GM23248 (cell line): ENCODE measurements at regions of chr9 and their contacts with region 1.

Region 1: DNA sequence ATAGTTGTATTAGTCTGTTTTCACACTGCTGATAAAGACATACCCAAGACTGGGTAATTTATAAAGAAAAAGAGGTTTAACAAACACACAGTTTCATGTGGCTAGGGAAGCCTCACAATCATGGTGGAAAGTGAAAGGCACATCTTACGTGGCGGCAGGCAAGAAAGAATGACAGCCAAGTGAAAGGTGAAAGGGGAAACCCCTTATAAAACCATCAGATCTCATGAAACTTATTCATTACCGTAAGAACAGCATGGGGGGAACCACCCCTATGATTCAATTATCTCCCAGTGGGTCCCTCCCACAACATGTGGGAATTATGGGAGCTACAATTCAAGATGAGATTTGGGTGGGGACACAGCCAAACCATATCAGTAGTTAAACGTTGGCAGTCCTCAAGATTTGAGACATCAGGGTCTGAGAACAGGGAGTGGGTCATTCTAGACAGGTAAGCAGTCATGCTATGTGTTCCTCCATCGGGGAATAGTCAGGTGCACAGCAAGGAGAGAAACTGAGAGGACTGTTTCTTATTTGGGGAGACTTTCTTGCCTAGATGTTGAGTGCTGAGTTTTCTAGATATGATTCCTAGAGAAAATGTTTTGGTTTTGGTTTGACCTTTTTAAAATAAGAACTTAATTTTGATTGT is 45.8 kb upstream of the ENTREP1 start:
- DNase-seq: no peak
- H3K4me3 ChIP-seq: no peak overlapping the region
- H3K27ac ChIP-seq: no peak overlapping the region
- H3K4me1 ChIP-seq: no peaks in the 10 kb centered on the region
- H3K27me3 ChIP-seq: peaks cover 15% of the 10 kb centered on the region; the same call in 1 of the 2 replicates

Region 2: GRCh38 chr9:68999393-69000105 is 279.7 kb before region 1 on chr9:
- in situ Hi-C with region 1: no loop called
- DNase-seq: peak; percentile 78
- H3K4me3 ChIP-seq: no peak overlapping the region
- H3K27ac ChIP-seq: no peak overlapping the region
- H3K4me1 ChIP-seq: no peaks in the 10 kb centered on the region
- H3K27me3 ChIP-seq: peaks cover 13% of the 10 kb centered on the region

Region 3: GRCh38 chr9:69215774-69216485 is 63.3 kb before region 1 on chr9:
- in situ Hi-C with region 1: loop called (anchors 10 kb)
- DNase-seq: no peak
- H3K4me3 ChIP-seq: no peak overlapping the region
- H3K27ac ChIP-seq: no peak overlapping the region
- H3K4me1 ChIP-seq: no peaks in the 10 kb centered on the region
- H3K27me3 ChIP-seq: no peaks in the 10 kb centered on the region